Prostate gland (tissue), 2 donors: ENCODE measurements at regions of chr19 and their contacts with region 1.

Region 1: GRCh38 chr19:33302175-33302973 is at the start of gene CEBPA:
- DNase-seq: peak; percentile 87
- H3K4me3 ChIP-seq: peak within 1 kb of the TSS; percentile 74 to 81
- H3K27ac ChIP-seq: peak within 1 kb of the TSS; percentile 95 to 97
- H3K4me1 ChIP-seq: peaks cover 20% of the 10 kb centered on the region
- H3K27me3 ChIP-seq: no peaks in the 10 kb centered on the region
- CTCF ChIP-seq: peak; percentile 20 to 93 (median 77)
- POLR2A ChIP-seq: peak; percentile 98
- total RNA-seq, gene CEBPA: 25.2 to 58.7 TPM

Region 2: DNA sequence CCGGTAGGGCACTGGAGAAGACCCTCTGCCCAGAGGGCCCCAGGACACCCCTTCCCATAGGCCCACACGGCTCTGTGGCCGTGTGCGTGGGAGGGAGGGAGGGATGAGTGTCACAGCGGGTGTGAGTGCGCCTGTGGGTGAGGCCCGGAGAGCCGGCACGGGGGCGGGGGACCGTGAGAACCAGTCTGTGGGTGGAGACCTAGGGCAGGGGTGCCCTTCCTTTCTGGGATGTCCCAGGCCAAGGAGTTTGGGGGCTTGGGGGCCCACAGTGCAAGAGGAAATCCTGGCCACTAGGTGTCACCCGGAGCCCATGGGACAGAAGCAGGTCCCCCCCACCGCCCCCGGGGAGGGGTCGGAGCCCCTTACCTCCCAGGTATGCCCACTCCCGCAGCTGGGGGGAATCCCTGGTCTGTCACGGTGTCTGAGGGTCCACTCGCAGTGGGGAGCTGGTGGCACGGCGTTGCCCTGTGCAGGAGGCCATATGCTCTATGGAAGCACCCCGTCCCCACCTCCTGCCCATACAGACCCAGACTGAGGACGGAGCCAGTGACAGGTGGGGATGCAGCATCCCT is 60.8 kb before region 1 on chr19:
- intact Hi-C with region 1: loop called (anchors 5 kb)
- DNase-seq: no peak
- H3K4me3 ChIP-seq: no peak overlapping the region
- H3K27ac ChIP-seq: no peak overlapping the region
- H3K4me1 ChIP-seq: no peaks in the 10 kb centered on the region
- H3K27me3 ChIP-seq: no peaks in the 10 kb centered on the region
- CTCF ChIP-seq: peak; percentile 50 to 92 (median 86)
- POLR2A ChIP-seq: no peak

Region 3: DNA sequence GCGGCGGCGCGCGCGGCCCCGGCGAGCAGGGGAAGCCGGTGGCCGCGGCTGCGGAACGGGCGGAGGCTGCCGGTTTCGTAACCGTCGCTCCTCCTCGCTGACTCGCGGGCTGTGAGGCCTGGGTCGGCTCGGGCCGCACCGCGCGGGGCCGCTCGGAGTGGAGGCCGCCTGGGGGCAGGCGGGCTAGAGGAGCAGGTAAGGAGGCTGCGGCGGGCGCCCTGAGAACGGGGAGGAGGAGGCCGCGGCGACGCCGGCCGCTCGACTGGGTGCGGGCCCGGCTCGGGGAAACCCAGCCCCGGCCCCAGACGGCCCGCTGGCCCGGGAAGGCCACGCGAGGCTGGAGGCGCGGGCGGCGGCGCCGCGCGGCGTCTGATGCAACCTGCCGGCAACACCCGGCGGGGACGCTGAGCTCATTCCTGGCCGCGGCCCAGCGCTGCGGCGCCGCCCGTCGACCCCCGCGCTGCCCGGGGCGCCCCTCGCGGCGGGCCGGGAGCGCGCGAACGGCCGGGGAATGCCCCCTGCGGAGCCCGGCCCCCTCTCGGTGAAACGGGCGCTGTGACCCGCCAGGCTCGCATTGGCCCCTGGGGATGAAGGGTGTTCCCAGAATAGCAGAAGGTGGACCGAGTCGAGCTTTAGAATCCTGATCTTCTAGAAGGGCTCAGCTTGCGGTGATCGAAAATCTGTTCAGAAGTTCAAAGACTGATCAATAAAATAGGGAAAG is 71.5 kb after region 1 on chr19 and contains the start of gene CEBPG:
- intact Hi-C with region 1: loop called (anchors 5 kb)
- DNase-seq: no peak
- H3K4me3 ChIP-seq: peak within 1 kb of the TSS; percentile 94 to 95
- H3K27ac ChIP-seq: peak within 1 kb of the TSS; percentile 89 to 94
- H3K4me1 ChIP-seq: no peaks in the 10 kb centered on the region
- H3K27me3 ChIP-seq: no peaks in the 10 kb centered on the region
- CTCF ChIP-seq: peak in 1 of 4 experiments; percentile 45
- POLR2A ChIP-seq: peak; percentile 90
- total RNA-seq, gene CEBPG: 15.7 to 19.7 TPM

Region 4: DNA sequence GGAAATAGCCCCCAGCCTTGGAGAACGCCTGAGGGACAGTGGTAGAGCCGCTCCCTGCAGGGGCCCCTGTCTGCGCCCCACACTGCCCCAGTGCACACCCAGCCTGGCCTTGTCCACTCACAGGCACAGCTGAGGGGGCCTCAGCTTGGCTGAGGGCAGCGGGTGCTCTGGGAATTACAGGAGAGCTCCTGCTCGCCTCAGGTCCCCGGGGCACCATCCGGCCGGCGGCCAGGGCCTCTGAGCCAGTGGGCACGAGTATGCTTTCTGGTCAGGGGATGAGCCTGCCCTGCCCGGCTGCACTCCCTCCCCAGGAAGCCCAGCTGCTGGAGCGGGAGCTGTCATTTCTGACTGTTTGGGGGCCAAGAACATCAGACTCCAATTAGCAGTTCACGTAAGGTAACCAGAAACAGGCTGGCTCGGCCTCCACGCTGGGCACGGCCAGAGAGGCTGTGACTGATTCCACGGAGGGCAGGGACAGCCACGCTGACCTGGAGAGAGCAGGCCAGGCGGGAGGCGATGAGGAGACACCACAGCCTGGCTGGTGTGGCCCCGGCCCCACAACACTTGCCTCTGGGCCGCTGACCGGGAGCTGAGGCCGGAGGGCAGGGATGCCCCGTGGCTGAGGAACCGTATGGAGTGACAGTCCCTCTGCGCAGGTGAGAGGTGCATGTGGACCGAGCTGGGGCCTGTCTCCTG is 86.5 kb after region 1 on chr19:
- intact Hi-C with region 1: loop called (anchors 5 kb)
- DNase-seq: no peak
- H3K4me3 ChIP-seq: no peak overlapping the region
- H3K27ac ChIP-seq: peak overlapping the region; percentile 50 to 60
- H3K4me1 ChIP-seq: peaks cover 22% of the 10 kb centered on the region
- H3K27me3 ChIP-seq: no peaks in the 10 kb centered on the region
- CTCF ChIP-seq: no peak
- POLR2A ChIP-seq: no peak